PC-9 (cell line): ENCODE measurements at regions of chr1 and their contacts with region 1.

Region 1: DNA sequence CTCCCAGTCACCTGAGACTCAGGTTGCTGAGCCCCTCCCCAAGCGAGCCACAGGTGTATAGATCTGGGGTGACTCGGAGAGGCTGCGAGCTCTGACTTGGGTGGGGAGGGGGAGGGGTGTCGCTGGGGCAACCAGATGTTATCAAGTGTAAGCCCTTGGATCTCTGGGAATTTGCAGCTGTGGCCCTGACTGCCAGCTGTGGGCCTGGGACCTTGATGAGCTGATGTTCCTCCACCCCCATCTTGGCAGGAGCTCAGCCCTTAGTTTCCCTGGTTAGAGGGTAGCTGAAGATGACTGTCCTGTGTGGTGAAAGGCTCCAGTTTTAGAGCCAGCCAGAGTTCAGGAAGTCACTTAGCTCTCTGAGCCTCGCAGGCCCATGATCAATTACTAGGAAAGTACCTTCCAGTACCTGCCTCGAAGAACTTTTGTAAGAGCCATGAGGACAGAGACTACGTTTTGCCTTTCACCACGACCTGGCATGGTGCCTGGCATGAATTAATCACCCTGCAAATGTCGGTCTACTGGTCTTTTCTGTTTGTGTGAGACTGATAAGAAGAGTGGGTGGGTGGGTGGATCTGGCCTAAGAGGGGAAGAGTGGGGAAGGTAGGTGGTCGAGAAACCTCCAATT is 55.8 kb downstream of the YARS1 start:
- DNase-seq: peak; percentile 84 to 96
- H3K4me3 ChIP-seq: peak overlapping the region; percentile 51
- H3K27ac ChIP-seq: peak overlapping the region; percentile 99
- H3K4me1 ChIP-seq: peaks cover 96% of the 10 kb centered on the region
- H3K27me3 ChIP-seq: no peaks in the 10 kb centered on the region
- CTCF ChIP-seq: no peak

Region 2: GRCh38 chr1:32741413-32742198 is 19.8 kb before region 1 on chr1:
- CTCF ChIA-PET with region 1: no interaction called
- POLR2A ChIA-PET with region 1: interaction called, 5 read pairs
- intact Hi-C with region 1: loop called (anchors 2 kb)
- DNase-seq: no peak
- H3K4me3 ChIP-seq: peak overlapping the region; percentile 70
- H3K27ac ChIP-seq: peak overlapping the region; percentile 84
- H3K4me1 ChIP-seq: peaks cover 45% of the 10 kb centered on the region
- H3K27me3 ChIP-seq: no peaks in the 10 kb centered on the region
- CTCF ChIP-seq: no peak; the same call in 1 of the 2 replicates

Region 3: GRCh38 chr1:33616773-33617172 is 855.4 kb after region 1 on chr1:
- CTCF ChIA-PET with region 1: no interaction called
- POLR2A ChIA-PET with region 1: interaction called, 19 read pairs
- intact Hi-C with region 1: no loop called
- DNase-seq: no peak
- H3K4me3 ChIP-seq: no peak overlapping the region
- H3K27ac ChIP-seq: no peak overlapping the region
- H3K4me1 ChIP-seq: no peaks in the 10 kb centered on the region
- H3K27me3 ChIP-seq: peaks cover 84% of the 10 kb centered on the region
- CTCF ChIP-seq: no peak